GM13976 (cell line): ENCODE measurements at regions of chr14 and their contacts with region 1.

Region 1: GRCh38 chr14:69715725-69716477 is 51.0 kb upstream of the SRSF5 start:
- DNase-seq: no peak
- CTCF ChIP-seq: no peak

Region 2: GRCh38 chr14:69606258-69607184 is 109.4 kb before region 1 on chr14:
- in situ Hi-C with region 1: loop called (anchors 5 kb)
- DNase-seq: no peak
- CTCF ChIP-seq: no peak